ENCODE measurements at regions of chr7 and their contacts with region 1.

Region 1: GRCh38 chr7:131654668-131655326 is 98.4 kb upstream of the PODXL start:
- DNase-seq: peak; percentile 94
- ATAC-seq: peak; percentile 91

Region 2: GRCh38 chr7:131507592-131508331 is 147.0 kb before region 1 on chr7:
- intact Hi-C with region 1: loop called (anchors 5 kb)
- DNase-seq: peak; percentile 93
- ATAC-seq: peak; percentile 74

Measured in sciatic nerve (tissue), 2 donors.